Posterior cingulate gyrus (tissue), 11 donors: ENCODE measurements at regions of chr16 and their contacts with region 1.

Region 1: GRCh38 chr16:8621572-8622314 is at the start of gene METTL22:
- DNase-seq: peak; percentile 81 to 99 (median 90)

Region 2: DNA sequence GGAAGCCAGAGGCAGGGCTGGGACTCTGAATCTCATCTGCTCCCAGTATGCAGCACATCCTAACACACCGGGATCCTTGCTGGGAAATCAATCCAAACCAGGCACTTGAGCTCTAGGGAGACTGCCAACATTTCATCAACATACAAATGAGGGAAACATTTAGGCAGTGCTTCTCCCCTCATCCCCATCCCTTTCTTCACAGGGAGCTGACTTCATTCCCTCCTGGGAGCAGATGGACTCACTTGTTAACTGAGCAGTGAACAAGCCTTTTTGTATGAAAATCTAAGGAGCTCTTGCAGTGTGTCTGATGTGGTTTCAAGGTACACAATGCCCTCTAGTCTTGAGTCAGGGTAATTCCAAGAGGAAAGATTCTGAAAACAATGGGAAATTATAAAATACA is 127.8 kb before region 1 on chr16:
- intact Hi-C with region 1: no loop called
- DNase-seq: no peak

Region 3: DNA sequence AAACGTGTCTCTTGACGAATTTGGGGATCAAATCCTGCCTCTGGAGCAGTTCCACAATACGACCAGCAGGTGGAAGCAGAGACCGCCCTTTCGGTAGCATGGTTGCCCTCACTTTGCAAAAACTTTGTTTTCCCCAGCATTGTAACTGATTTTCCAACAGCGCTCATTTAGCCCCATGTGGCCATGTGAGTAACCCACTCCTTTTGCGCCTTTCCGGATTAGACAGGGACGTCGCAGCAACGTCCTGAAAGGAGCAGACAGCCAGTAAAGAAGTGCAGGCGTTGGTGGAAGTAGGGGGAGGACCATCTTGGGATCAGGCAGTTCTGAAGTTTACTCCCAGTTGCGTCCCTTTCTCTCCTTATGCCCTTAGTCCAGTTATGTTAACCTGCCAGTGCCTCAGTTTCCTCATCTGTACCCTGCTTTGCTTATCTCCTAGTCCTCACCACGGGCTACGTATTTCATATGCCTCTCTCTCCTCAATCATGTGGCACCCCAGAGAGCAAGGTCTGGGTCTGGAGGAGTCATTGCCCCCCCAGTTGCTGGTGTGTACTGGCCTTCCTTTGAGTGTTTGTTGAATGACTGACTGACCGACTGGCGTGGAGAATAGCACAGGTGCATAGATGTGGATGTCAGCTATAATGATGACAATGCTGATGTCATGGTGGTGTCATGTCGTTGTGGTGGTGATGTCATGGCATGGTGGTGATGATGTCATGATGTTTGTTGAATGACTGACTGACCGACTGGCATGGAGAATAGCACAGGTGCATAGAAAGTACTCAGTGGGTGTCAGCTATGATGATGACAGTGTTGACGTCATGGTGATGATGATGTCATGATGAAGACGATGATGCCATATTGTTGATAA is 53.8 kb before region 1 on chr16:
- intact Hi-C with region 1: loop called (anchors 5 kb)
- DNase-seq: peak; percentile 32 to 95 (median 74)